Prostate gland (tissue), 2 donors: ENCODE measurements at regions of chr12 and their contacts with region 1.

Region 1: DNA sequence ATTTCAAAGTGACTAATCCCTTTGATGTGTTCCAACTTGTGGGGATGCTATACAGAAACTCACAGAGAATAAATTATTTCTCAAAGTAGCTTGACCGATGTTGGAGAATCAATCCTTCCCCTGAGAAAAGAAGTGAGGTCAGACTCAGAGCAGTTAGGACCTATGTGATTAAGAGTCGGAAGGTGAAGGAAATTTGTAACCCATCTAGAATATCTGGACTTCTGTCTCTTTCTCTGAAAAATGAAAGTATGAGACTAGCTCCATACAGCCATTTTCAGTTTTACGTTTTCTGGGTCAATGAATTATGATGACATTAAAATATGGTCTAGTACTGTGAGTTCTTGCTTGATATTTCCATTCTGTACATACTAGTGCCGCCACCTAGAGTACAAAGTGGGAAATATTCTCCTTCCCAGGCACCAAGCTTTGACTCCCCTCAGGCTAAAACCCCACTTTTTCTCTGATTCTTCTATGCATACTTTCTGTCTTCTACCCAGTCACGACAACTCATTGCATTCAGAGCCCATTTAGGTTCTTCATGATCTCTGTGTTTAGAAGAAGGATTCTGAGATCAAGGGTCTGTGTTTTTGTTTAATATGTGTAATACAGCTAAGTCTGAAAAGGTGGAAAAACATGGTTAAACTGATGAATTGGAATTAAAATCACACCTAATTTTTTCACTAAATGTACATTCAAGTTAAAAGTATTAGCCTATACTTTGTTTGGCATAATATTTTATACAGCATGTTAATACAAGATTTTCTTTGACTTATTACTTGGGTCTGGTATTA is 6.9 kb upstream of the NTS start:
- DNase-seq: peak; percentile 45
- H3K4me3 ChIP-seq: no peak overlapping the region
- H3K27ac ChIP-seq: no peak overlapping the region
- H3K4me1 ChIP-seq: no peaks in the 10 kb centered on the region
- H3K27me3 ChIP-seq: no peaks in the 10 kb centered on the region
- CTCF ChIP-seq: peak; percentile 34 to 80 (median 74)
- POLR2A ChIP-seq: no peak

Region 2: DNA sequence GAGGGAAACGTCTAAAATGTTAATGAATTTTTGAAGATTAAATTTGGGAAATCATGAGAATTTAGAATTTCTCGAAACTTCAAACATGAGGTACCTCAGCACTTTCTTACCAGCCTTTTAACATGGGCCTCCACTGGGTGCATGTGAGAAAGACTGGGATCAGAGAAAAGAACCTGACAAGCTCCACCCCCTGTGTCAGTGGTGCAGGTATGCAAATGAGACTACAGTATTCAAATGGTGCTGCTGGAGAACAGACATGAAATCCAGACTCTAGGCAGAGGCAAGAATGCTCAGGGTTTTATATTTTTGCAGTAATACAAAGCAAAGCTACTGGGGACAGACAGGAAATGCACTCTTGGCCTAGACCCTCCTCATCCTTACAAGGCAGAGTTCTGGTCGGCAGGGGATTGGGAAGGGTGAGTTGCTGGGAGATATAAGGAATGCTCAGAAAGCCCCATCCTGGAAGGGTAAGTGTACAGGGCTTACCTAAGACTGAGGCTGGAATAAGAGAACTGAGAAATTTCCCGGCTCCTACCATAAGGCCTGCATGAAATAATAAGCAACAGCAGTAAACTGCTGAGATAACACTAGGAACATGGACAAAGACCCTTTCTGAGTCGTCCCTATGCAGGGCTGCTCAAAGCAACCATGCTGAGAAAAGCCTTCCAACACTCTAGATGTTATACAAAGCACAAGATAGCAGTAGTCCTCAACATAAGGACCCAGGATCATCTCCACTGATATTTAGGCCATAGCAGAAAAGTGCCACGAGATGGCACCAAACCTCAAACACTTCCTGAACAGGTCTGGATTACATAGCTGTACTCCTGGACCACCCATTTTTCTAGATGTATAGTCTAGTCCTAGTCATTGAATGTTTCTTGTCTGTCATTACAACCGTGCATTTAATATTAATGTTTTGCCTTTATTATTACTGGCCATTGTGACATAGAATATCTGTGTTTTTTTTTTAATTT is 291.8 kb before region 1 on chr12:
- intact Hi-C with region 1: loop called (anchors 2 kb)
- DNase-seq: peak; percentile 50
- H3K4me3 ChIP-seq: no peak overlapping the region
- H3K27ac ChIP-seq: no peak overlapping the region
- H3K4me1 ChIP-seq: no peaks in the 10 kb centered on the region
- H3K27me3 ChIP-seq: no peaks in the 10 kb centered on the region
- CTCF ChIP-seq: peak in 3 of 4 experiments; percentile 62 to 70 (median 65)
- POLR2A ChIP-seq: no peak